ENCODE measurements at regions of chr9 and their contacts with region 1.

Region 1: DNA sequence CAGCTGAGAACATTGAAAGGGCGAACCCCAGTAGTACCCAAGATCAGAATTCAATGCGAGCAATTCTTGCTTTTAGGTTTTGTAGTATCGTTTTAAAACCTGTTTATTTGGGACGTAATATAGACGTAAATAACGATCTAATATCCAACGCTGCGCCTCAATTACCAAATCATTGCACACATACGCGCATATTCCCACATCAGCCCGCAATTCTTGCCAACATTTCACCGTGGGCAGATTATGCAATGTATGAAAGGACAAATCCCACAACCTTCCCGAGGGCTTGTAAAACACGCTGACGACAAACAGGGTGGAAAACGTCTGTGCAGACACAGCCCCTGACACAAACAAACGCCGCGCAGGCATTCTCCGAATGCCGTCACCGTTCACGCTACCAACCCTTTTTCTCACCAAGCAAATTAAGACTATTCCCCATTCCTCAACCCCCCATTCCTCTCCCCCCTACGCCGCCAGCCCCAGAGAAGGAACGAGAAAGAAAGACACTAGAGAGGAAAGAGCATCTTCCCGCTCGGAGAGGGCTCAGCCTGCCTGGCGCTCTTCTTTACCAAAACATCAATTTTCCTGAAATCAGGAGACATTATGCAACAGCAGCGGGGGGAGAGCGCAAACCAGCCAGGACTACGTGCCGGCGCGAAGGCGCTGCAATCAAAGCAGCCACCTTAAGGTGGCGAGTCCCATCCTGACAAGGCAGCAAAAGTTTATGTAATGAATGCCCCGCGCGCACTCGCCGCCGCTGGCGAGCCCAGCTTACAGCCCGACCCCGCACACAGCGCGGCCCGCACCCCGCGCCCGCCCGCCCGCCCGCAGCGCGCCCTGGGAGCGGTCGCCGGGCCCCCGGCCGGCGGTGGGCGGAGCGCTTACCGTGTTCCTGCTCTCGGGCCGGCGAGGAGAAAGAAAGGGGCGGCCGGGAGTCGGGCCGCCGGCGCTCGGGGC is 597 bp downstream of the NFIL3 start:
- DNase-seq: no peak
- ATAC-seq: peak; percentile 52
- H3K4me3 ChIP-seq: peak overlapping the region; percentile 92
- H3K27ac ChIP-seq: no peak overlapping the region
- H3K4me1 ChIP-seq: peaks cover 6% of the 10 kb centered on the region
- H3K27me3 ChIP-seq: peaks cover 12 to 24% of the 10 kb centered on the region in 2 experiments
- CTCF ChIP-seq: peak; percentile 21 to 43 (median 27); a peak in 4 of 6 replicates
- EP300 ChIP-seq: no peak
- POLR2A ChIP-seq: 0 out of 2 replicates have a peak, but pooled peaks have one; percentile 1
- RAD21 ChIP-seq: no peak

Region 2: GRCh38 chr9:91036826-91037510 is 386.1 kb before region 1 on chr9:
- CTCF ChIA-PET with region 1: interaction called, 33 read pairs
- POLR2A ChIA-PET with region 1: no interaction called
- RAD21 ChIA-PET with region 1: interaction called, 9 read pairs
- SMC1A ChIA-PET with region 1: interaction called, 3 read pairs
- in situ Hi-C with region 1: loop called (anchors 5 kb)
- intact Hi-C with region 1: loop called (anchors 5 kb)
- DNase-seq: no peak
- ATAC-seq: peak; percentile 73
- H3K4me3 ChIP-seq: no peak overlapping the region
- H3K27ac ChIP-seq: no peak overlapping the region
- H3K4me1 ChIP-seq: peaks cover 30% of the 10 kb centered on the region
- H3K27me3 ChIP-seq: no peaks in the 10 kb centered on the region; a peak in 2 of 4 replicates
- CTCF ChIP-seq: peak in 2 of 3 experiments; percentile 25 to 41; a peak in 3 of 6 replicates
- EP300 ChIP-seq: no peak
- POLR2A ChIP-seq: no peak
- RAD21 ChIP-seq: peak; percentile 61

Region 3: DNA sequence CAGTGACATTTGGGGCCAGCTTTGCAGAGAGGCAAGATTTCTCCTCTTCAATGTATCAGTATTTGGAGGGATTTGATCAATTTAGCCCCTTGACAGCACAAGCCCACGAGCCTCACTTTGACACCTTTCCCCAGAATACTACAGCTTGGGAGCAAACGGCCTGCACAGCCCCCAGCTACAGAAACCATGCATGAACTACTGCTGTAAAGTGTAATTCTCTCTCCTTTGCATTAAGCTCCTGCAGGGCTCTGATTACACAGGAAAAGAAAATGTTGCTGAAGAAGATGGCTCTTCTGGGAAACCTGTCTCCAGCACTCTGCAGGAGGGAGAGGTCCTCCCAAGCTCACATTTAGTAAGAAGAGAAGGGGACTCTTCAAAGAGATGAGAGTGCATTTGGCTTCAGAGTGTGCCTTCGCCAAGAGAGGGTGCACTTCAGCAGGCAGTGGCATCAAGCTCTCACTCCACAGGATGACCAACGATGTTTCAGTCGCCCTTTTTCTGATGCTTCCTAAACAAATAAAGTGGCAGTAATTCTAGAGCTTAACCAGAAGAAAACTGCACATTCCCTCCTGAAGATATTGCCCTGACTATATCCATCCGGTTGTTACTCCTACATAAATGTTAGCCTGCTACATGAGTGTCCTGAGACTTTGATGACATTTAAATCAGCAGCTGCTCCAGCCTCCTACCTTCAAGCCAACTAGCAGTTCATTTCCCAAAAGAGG is 333.5 kb before region 1 on chr9:
- CTCF ChIA-PET with region 1: interaction called, 25 read pairs
- POLR2A ChIA-PET with region 1: no interaction called
- RAD21 ChIA-PET with region 1: interaction called, 21 read pairs
- SMC1A ChIA-PET with region 1: interaction called, 17 read pairs
- in situ Hi-C with region 1: no loop called
- intact Hi-C with region 1: loop called (anchors 2 kb)
- DNase-seq: no peak
- ATAC-seq: peak; percentile 64
- H3K4me3 ChIP-seq: no peak overlapping the region
- H3K27ac ChIP-seq: no peak overlapping the region
- H3K4me1 ChIP-seq: no peaks in the 10 kb centered on the region
- H3K27me3 ChIP-seq: peaks cover 0 to 1% of the 10 kb centered on the region in 2 experiments; a peak in 3 of 4 replicates
- CTCF ChIP-seq: peak; percentile 24 to 54 (median 51); a peak in 4 of 6 replicates
- EP300 ChIP-seq: no peak
- POLR2A ChIP-seq: no peak
- RAD21 ChIP-seq: peak; percentile 82

Region 4: DNA sequence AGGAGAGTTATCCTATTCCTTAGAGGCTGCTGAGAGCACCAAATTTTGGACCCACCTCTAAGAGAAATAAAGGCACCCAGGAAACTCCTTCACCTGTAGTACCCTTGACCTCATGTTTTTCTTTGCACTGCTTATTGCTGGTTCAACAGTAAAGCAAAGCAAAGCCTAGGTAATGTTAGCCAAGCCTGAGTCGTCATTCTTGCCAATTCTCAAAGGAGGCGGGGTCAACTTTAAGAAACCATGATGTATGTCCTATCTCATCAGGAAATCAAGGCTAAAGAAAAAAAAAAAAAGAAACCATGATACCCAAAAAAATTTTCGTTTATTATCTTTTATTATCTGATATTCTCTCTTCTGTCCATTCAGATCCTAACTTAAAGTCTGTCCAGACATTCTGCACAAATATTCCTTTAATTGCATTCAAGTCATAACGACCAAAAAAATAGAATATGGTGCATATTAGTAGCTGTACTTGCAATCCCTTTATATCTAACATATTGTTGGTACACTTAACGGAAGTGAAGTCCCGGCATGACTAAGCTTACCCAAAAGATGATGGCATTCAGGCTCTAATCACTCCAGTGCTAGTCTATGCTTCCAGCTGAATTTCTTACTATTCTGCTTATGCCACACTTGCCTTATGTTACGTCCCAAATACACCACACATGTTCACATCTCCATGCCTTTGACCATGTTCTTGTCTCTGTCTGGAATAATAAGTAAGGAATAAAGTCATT is 63.1 kb before region 1 on chr9:
- CTCF ChIA-PET with region 1: interaction called, 7 read pairs
- POLR2A ChIA-PET with region 1: interaction called, 3 read pairs
- RAD21 ChIA-PET with region 1: interaction called, 6 read pairs
- SMC1A ChIA-PET with region 1: interaction called, 3 read pairs
- in situ Hi-C with region 1: no loop called
- intact Hi-C with region 1: loop called (anchors 5 kb)
- DNase-seq: no peak
- ATAC-seq: no peak
- H3K4me3 ChIP-seq: peak overlapping the region; percentile 69; the same call in 1 of the 2 replicates
- H3K27ac ChIP-seq: no peak overlapping the region
- H3K4me1 ChIP-seq: peaks cover 26% of the 10 kb centered on the region
- H3K27me3 ChIP-seq: 0 out of 4 replicates have a peak, but pooled peaks cover 0 to 2% of the 10 kb centered on the region in 2 experiments
- CTCF ChIP-seq: no peak
- EP300 ChIP-seq: no peak
- POLR2A ChIP-seq: no peak
- RAD21 ChIP-seq: no peak

Region 5: GRCh38 chr9:91405343-91406077 is 17.5 kb before region 1 on chr9:
- CTCF ChIA-PET with region 1: no interaction called
- POLR2A ChIA-PET with region 1: no interaction called
- RAD21 ChIA-PET with region 1: no interaction called
- SMC1A ChIA-PET with region 1: no interaction called
- in situ Hi-C with region 1: no loop called
- intact Hi-C with region 1: no loop called
- DNase-seq: no peak
- ATAC-seq: no peak
- H3K4me3 ChIP-seq: no peak overlapping the region
- H3K27ac ChIP-seq: no peak overlapping the region
- H3K4me1 ChIP-seq: no peaks in the 10 kb centered on the region
- H3K27me3 ChIP-seq: no peaks in the 10 kb centered on the region; a peak in 1 of 4 replicates
- CTCF ChIP-seq: no peak
- EP300 ChIP-seq: no peak
- POLR2A ChIP-seq: no peak
- RAD21 ChIP-seq: no peak

Region 6: GRCh38 chr9:91452844-91453243 is 29.8 kb after region 1 on chr9:
- CTCF ChIA-PET with region 1: no interaction called
- POLR2A ChIA-PET with region 1: no interaction called
- RAD21 ChIA-PET with region 1: no interaction called
- SMC1A ChIA-PET with region 1: no interaction called
- in situ Hi-C with region 1: no loop called
- intact Hi-C with region 1: no loop called
- DNase-seq: no peak
- ATAC-seq: no peak
- H3K4me3 ChIP-seq: no peak overlapping the region
- H3K27ac ChIP-seq: no peak overlapping the region
- H3K4me1 ChIP-seq: no peaks in the 10 kb centered on the region
- H3K27me3 ChIP-seq: no peaks in the 10 kb centered on the region
- CTCF ChIP-seq: no peak
- EP300 ChIP-seq: no peak
- POLR2A ChIP-seq: no peak
- RAD21 ChIP-seq: no peak

Region 7: GRCh38 chr9:91676046-91676445 is 253.0 kb after region 1 on chr9:
- CTCF ChIA-PET with region 1: interaction called, 5 read pairs
- POLR2A ChIA-PET with region 1: no interaction called
- RAD21 ChIA-PET with region 1: no interaction called
- SMC1A ChIA-PET with region 1: no interaction called
- in situ Hi-C with region 1: no loop called
- intact Hi-C with region 1: loop called (anchors 10 kb)
- DNase-seq: peak; percentile 3
- ATAC-seq: peak; percentile 80
- H3K4me3 ChIP-seq: no peak overlapping the region
- H3K27ac ChIP-seq: no peak overlapping the region
- H3K4me1 ChIP-seq: no peaks in the 10 kb centered on the region
- H3K27me3 ChIP-seq: no peaks in the 10 kb centered on the region
- CTCF ChIP-seq: peak; percentile 43 to 61 (median 57); a peak in 5 of 6 replicates
- EP300 ChIP-seq: no peak
- POLR2A ChIP-seq: no peak
- RAD21 ChIP-seq: peak; percentile 58